Posterior vena cava (tissue), 2 donors: ENCODE measurements at regions of chr22 and their contacts with region 1.

Region 1: GRCh38 chr22:24938741-24939341 is 7.7 kb downstream of the LHFPL7 start:
- DNase-seq: no peak

Region 2: GRCh38 chr22:24894220-24894975 is 44.4 kb before region 1 on chr22:
- intact Hi-C with region 1: loop called in 1 of 2 experiments (anchors 1 kb)
- DNase-seq: peak; percentile 93

Region 3: DNA sequence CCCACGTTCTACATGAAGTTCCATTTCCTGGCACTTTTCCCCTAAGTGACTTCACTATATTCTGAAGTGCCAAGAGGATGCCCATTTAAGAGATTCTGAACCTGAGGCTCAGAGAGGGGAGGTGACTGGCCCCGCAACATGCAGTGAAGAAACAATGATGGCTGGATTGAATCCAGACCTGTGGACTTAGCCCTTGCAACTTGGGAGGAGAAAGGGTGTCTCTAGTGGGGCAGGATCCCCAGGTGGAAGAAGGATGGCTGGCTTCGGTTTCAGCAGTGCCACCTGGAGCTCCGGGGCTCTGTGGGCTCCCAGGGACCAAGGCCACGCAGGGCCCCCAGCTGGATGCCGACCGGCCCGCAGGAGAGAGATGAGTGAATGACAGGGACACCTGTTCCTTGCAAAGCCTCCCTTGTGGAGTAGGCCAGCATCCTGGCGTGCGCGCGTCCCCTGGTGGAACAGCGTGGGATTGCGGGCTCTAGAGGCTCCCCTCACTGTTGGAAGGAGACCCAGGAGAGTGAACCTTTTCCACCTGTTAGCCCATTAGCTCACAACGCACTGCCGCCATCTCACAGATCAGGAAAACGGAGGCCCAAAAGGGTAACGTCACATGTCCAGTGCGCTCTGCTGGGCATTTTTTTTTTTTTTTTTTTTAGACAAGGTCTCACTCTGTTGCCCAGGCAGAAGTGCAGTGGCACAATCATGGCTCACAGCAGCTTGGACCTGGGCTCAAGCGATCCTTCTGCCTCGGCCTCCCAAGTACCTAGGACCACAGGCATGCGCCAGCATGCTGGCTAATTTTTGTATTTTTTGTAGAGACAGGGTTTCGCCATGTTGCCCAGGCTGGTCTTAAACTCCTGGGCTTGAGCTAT is 118.4 kb after region 1 on chr22:
- intact Hi-C with region 1: loop called in 1 of 2 experiments (anchors 5 kb)
- DNase-seq: peak; percentile 88